ENCODE measurements at regions of chr10 and their contacts with region 1.

Region 1: DNA sequence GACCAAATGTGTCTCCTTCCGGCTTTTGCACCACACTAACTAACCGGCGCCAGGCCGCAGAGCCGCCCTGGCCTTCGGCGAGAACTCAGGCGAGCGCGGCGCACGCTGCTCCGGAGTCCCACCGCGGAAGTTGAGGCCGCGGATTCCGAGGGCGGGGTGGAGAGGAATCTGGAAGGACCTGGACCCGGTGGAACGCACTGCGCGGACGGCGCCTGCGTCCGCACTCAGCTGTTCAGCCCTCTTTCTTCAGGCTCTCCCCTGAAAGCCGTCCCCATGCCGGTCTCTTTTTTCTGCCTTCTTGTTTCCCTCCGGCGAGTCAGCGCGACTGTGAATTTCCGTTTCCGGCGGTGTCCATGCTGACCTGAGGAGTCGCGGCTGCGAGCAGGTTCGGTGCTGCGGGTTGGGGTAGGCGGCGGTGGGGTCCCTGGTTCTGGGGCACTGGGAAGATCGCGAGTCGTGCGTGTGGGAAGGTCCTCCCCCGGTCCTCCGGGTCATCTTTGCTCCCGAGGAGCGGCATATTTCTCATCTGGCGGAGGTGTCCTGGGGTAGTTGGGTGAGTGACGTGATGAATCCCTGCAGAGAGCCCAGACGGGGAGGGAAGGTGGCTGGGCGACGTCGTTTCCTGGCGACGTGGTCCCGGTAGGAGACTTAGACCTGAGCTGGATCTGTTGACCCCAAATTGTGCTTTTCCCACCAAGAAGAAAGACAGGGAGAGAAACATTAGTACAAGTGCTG is at the start of gene BMS1:
- DNase-seq: peak; percentile 94
- ATAC-seq: peak; percentile 94
- H3K4me3 ChIP-seq: peak within 1 kb of the TSS; percentile 70
- H3K27ac ChIP-seq: peak within 1 kb of the TSS; percentile 91
- H3K4me1 ChIP-seq: no peaks in the 10 kb centered on the region
- H3K27me3 ChIP-seq: no peaks in the 10 kb centered on the region
- CTCF ChIP-seq: no peak
- POLR2A ChIP-seq: peak; percentile 79
- RAD21 ChIP-seq: no peak
- total RNA-seq, gene BMS1: 22.9 and 28.3 TPM in 2 replicates

Region 2: DNA sequence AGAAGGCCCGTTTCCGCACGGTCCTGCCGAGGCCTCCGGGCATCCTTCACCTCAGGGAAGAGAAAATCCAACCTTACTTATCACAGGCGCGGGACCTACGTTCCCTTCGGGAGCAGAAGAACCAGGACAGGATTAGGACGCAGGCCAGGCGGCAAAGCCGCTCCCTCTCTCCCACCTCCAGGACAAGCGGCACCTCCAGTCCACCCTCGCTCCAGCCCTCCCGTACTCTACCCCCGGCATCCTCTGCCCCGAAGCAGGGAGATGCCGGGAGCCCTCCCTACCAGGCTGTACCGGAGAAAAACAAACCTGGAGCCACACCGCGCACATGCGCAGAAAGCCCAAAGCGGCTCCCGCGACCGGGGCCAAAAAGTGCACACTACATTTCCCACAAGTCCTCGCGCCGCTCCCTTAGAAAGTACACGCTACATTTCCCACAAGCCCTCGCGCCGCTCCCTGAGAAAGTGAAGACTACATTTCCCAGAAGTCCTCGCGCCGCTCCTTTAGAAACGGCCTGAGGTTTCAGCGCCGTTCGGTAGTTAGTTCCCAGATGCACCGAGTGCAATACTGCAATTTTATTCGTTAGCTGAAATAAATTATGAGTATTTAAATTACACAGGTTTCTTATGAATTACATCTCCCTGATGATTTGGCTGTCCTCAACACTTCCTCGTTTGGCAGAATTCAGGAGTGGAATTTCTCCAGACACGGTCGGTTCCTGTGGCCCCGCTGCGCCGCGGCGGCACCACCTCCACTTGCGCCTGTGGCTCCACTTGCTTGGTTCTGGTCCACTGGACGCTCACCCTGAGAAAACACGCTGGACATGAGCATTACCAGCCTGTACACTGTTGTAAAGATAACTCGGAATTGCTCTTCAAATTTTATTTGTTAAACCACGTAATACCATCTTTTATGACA is 229.9 kb before region 1 on chr10:
- CTCF ChIA-PET with region 1: no interaction called
- POLR2A ChIA-PET with region 1: interaction called, 3 read pairs
- dilution Hi-C with region 1: no loop called
- in situ Hi-C with region 1: no loop called
- intact Hi-C with region 1: loop called (anchors 1 kb)
- DNase-seq: peak; percentile 97
- ATAC-seq: peak; percentile 96
- H3K4me3 ChIP-seq: peak overlapping the region; percentile 74
- H3K27ac ChIP-seq: peak overlapping the region; percentile 34; the same call in 1 of the 2 replicates
- H3K4me1 ChIP-seq: peaks cover 5% of the 10 kb centered on the region; the same call in 1 of the 2 replicates
- H3K27me3 ChIP-seq: no peaks in the 10 kb centered on the region
- CTCF ChIP-seq: no peak
- POLR2A ChIP-seq: no peak
- RAD21 ChIP-seq: no peak

Region 3: DNA sequence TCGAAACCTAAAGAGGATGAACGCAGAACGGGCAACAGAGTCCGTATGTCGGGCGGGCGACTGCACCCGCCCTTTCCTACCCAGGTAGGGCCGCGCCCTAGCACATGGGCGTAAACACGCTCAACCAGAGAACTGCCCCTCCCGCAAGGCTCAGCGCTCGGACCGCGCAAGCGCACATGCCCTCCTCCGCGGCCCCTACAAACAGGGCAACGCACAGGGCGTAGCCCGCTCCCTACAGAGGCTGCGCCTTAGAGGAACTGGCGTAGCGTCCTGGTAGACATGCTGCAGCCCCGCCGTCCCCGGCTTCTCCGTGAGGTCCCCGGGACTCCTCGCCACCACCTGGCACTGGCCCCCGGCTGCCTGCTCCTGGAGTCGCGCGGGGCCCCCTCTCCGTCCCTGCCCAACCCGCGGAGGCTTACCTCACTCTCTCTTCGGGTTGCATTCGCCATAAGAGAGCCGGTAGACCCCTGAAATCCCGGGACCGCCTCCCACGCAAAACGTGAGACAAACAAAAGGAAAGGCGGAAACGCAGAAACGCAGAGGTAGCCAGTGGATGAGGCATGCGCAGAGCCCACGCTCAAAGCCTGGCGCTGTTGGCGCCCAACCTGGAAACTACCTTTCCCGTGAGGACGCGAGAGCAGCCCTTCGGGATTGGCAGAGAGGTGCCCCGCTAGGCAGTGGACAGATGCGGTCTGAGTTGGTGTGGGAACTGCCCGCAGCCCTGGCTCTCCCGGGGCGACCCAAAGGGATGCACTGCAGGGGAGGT is 144.4 kb before region 1 on chr10 and contains the start of gene ZNF33B:
- CTCF ChIA-PET with region 1: no interaction called
- POLR2A ChIA-PET with region 1: no interaction called
- dilution Hi-C with region 1: no loop called
- in situ Hi-C with region 1: no loop called
- intact Hi-C with region 1: loop called (anchors 10 kb)
- DNase-seq: peak; percentile 89
- ATAC-seq: peak; percentile 99
- H3K4me3 ChIP-seq: peak within 1 kb of the TSS; percentile 92
- H3K27ac ChIP-seq: peak within 1 kb of the TSS; percentile 79
- H3K4me1 ChIP-seq: peaks cover 1% of the 10 kb centered on the region; the same call in 1 of the 2 replicates
- H3K27me3 ChIP-seq: no peaks in the 10 kb centered on the region
- CTCF ChIP-seq: no peak
- POLR2A ChIP-seq: peak; percentile 71; the same call in 1 of the 2 replicates
- RAD21 ChIP-seq: no peak
- total RNA-seq, gene ZNF33B: 4.5 and 5.0 TPM in 2 replicates

Region 4: GRCh38 chr10:42753126-42753506 is 29.5 kb before region 1 on chr10:
- CTCF ChIA-PET with region 1: no interaction called
- POLR2A ChIA-PET with region 1: no interaction called
- dilution Hi-C with region 1: no loop called
- in situ Hi-C with region 1: no loop called
- intact Hi-C with region 1: no loop called
- DNase-seq: peak; percentile 55
- ATAC-seq: peak; percentile 95
- H3K4me3 ChIP-seq: peak overlapping the region; percentile 38
- H3K27ac ChIP-seq: no peak overlapping the region
- H3K4me1 ChIP-seq: no peaks in the 10 kb centered on the region
- H3K27me3 ChIP-seq: peaks cover 34% of the 10 kb centered on the region
- CTCF ChIP-seq: peak; percentile 74
- POLR2A ChIP-seq: no peak
- RAD21 ChIP-seq: peak; percentile 55

Measured in IMR-90 (cell line).